Activated CD4-positive, alpha-beta memory T cell treated with anti-CD3 and anti-CD28 coated beads, Interleukin-2, amount 10 ng/mL, durations not matched to agents 7 days and 5 days (primary cell): ENCODE measurements at regions of chr10 and their contacts with region 1.

Region 1: DNA sequence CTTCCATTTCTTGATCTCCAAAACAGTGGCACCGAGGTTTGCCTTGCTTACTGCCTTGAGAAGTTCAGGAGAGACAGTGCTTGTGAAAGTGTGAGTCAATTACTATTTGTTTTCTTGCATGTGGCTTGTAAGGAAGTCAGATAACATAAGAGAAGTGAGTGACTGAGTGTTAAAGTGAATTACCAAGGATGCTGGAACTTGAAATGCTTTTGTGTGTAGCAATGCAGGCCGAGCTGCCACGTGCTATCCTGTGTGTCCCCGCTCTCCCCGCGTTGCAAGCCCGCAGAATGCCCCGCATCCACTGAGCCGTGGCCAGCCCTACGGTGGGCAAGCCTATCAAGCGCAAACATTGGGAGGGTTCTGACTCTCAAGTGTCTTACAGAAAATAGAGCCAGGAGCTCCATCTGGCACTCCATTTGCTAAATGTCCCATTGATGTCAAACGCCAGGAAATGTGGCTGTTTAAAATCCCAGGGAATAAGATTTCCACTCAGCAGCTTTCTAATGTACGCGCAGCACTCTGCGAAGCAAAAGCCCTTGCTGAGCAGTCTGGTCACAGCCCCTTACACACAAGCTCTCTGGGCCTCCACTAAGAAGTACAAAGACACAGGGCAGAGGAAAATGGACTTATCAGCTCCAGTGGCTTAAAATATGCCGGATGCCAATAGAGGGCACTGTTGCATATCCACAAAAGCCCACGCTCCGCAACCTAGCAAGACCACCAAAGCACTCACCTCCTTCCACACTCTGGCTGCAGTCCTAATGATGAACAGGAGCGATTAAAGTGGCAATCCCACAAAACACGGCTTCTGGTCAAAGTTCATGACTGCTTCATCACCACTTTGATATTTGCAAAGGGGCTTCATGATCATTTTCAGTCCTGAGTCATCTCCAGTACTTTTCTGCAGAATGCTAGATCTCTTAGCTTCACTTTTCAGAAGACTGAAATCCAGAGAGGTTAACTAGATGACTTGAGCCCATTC is 158.0 kb upstream of the ITGB1 start:
- DNase-seq: peak; percentile 56
- H3K4me3 Mint-ChIP-seq: peak overlapping the region; percentile 69
- H3K27ac Mint-ChIP-seq: peak overlapping the region; percentile 96
- H3K4me1 Mint-ChIP-seq: peaks cover 95% of the 10 kb centered on the region
- H3K27me3 Mint-ChIP-seq: no peaks in the 10 kb centered on the region

Region 2: GRCh38 chr10:32958085-32959005 is 157.7 kb before region 1 on chr10 and contains the start of gene ITGB1:
- CTCF ChIA-PET with region 1: interaction called, 3 read pairs
- POLR2A ChIA-PET with region 1: interaction called, 23 read pairs
- DNase-seq: peak; percentile 88
- H3K4me3 Mint-ChIP-seq: peak within 1 kb of the TSS; percentile 82
- H3K27ac Mint-ChIP-seq: peak within 1 kb of the TSS; percentile 82
- H3K4me1 Mint-ChIP-seq: peaks cover 46% of the 10 kb centered on the region
- H3K27me3 Mint-ChIP-seq: no peaks in the 10 kb centered on the region
- total RNA-seq, gene ITGB1: 233 to 242 TPM

Region 3: DNA sequence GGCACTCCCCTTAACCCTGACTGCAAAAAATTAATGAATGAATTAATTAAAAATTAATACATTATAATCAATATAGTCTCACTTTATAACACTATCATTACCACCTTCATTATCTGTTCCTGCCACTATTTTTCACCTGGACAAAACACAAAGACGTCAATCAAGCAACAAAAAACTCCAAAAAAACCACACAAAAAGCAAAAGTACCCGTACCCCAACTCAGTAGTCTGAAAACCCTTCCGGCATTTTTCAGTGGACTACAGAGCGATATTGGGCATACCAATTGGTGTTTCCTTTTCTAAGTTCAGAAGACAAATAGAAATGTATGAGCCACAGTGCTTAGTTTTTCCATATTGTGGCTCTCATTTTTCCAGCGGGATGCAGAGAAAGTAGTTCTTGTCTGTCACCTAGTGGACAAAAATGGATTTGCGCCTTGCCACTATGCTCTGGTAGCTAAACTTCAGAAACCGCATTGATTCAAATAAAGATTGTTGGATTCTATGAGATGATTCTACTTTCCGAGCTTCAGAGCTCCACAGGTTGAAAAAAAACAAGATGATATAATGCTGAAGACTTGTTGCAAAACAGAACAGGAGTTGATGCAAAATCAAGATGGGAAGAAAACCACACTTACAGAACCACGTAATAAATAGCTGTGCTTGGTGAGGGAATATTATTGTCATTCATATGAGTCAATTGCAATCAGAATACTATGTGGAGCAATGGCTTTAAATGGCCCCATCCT is 107.4 kb before region 1 on chr10:
- CTCF ChIA-PET with region 1: interaction called, 14 read pairs
- POLR2A ChIA-PET with region 1: interaction called, 34 read pairs
- DNase-seq: peak; percentile 70
- H3K4me3 Mint-ChIP-seq: peak overlapping the region; percentile 51
- H3K27ac Mint-ChIP-seq: peak overlapping the region; percentile 78
- H3K4me1 Mint-ChIP-seq: peaks cover 53% of the 10 kb centered on the region
- H3K27me3 Mint-ChIP-seq: no peaks in the 10 kb centered on the region

Region 4: GRCh38 chr10:33134011-33134751 is 18.2 kb after region 1 on chr10:
- CTCF ChIA-PET with region 1: interaction called, 27 read pairs
- POLR2A ChIA-PET with region 1: interaction called, 408 read pairs
- DNase-seq: peak; percentile 84
- H3K4me3 Mint-ChIP-seq: no peak overlapping the region
- H3K27ac Mint-ChIP-seq: peak overlapping the region; percentile 90
- H3K4me1 Mint-ChIP-seq: peaks cover 91% of the 10 kb centered on the region
- H3K27me3 Mint-ChIP-seq: no peaks in the 10 kb centered on the region

Region 5: DNA sequence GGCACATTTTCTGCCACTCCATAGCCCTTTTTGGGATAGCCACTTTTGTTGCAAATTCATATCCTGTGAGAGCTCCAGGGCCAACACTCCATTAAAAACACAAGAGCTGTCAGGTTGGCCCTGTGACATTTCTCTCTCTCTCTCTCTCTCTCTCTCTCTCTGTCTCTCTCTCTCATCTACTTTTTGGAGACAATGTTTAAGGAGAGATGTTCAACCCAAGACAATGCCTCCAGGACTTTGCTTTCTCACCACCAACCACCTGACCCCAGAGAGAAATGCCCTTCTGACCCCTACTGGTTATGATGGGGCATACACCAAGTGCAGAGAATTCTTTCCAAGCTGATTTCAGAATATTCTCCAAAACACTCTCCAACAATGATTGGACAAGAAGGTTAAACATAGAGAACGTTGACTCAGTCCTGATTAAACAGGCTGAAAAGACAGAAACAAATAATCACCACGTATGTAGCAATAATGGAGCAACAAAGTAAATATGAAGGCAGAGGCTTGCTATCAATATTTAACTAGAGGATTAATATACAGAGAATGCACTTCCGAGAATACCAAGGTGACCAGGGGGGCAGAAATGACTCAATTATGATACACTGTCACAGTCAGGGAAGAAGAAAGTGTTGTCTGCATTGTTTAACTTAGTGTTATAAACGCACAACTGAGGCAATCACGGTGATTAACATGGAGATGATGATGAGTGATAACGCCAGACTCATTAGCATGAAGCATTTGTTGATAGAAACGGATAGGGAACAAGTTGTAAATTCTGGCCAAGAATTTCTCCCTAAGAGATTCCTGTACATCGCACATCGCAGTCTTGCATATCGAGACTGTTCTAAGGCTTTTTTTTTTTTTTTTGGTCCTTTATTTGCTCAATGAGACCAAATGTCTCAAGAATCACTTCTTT is 40.0 kb after region 1 on chr10:
- CTCF ChIA-PET with region 1: interaction called, 43 read pairs
- POLR2A ChIA-PET with region 1: interaction called, 97 read pairs
- DNase-seq: peak; percentile 53
- H3K4me3 Mint-ChIP-seq: no peak overlapping the region
- H3K27ac Mint-ChIP-seq: peak overlapping the region; percentile 59
- H3K4me1 Mint-ChIP-seq: peaks cover 53% of the 10 kb centered on the region
- H3K27me3 Mint-ChIP-seq: no peaks in the 10 kb centered on the region